ENCODE measurements at regions of chr1 and their contacts with region 1.

Region 1: GRCh38 chr1:27662707-27663393 is 9.1 kb downstream of the IFI6 start:
- DNase-seq: peak; percentile 94
- H3K4me3 Mint-ChIP-seq: peak overlapping the region; percentile 67
- H3K27ac Mint-ChIP-seq: peak overlapping the region; percentile 99
- H3K4me1 Mint-ChIP-seq: peaks cover 44% of the 10 kb centered on the region
- H3K27me3 Mint-ChIP-seq: no peaks in the 10 kb centered on the region

Region 2: DNA sequence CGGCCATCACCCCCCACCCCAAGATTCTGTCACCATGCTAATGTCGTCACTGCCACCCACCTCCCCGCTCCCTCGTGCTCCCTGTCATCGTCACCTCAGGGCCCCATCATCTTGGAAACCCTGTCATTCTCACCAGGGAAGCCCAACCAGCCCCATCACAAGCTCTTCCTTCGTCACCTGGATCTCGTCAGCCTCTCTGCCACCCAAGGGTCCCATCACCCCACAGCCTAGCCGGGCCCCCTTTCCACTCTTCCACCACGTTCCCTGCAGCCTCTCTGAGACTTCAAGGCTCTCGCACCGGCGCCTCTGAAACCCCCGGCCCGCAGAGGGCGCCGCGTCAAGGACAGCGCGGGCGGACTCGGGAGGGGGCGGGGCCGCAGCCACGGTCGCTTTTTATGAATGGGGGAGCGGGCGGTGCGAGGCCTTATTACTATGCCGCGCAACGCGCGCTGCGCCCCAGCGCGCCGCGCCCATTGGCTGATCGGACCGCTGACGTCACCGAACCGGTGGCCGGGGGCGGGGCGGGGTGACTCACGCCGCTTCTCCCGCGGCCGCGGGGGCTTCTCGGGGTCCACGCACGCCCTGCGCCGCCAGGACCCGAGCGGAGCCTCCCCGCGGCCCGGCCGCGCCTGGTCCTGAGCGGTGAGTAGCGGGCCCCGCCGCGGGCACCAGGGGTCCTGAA is 270.6 kb before region 1 on chr1 and contains the start of gene GPR3:
- CTCF ChIA-PET with region 1: interaction called, 11 read pairs
- POLR2A ChIA-PET with region 1: no interaction called
- intact Hi-C with region 1: loop called (anchors 2 kb)
- DNase-seq: peak; percentile 96
- H3K4me3 Mint-ChIP-seq: peak within 1 kb of the TSS; percentile 78
- H3K27ac Mint-ChIP-seq: peak within 1 kb of the TSS; percentile 63
- H3K4me1 Mint-ChIP-seq: peaks cover 13% of the 10 kb centered on the region
- H3K27me3 Mint-ChIP-seq: no peaks in the 10 kb centered on the region
- total RNA-seq, gene GPR3: 1.3 to 1.5 TPM

Region 3: GRCh38 chr1:27489910-27490741 is 172.7 kb before region 1 on chr1 and contains the start of gene WASF2:
- CTCF ChIA-PET with region 1: interaction called, 3 read pairs
- POLR2A ChIA-PET with region 1: interaction called, 3 read pairs
- intact Hi-C with region 1: loop called (anchors 2 kb)
- DNase-seq: peak; percentile 98
- H3K4me3 Mint-ChIP-seq: peak within 1 kb of the TSS; percentile 96
- H3K27ac Mint-ChIP-seq: peak within 1 kb of the TSS; percentile 99
- H3K4me1 Mint-ChIP-seq: peaks cover 28% of the 10 kb centered on the region
- H3K27me3 Mint-ChIP-seq: no peaks in the 10 kb centered on the region
- total RNA-seq, gene WASF2: 109 to 110 TPM

Region 4: DNA sequence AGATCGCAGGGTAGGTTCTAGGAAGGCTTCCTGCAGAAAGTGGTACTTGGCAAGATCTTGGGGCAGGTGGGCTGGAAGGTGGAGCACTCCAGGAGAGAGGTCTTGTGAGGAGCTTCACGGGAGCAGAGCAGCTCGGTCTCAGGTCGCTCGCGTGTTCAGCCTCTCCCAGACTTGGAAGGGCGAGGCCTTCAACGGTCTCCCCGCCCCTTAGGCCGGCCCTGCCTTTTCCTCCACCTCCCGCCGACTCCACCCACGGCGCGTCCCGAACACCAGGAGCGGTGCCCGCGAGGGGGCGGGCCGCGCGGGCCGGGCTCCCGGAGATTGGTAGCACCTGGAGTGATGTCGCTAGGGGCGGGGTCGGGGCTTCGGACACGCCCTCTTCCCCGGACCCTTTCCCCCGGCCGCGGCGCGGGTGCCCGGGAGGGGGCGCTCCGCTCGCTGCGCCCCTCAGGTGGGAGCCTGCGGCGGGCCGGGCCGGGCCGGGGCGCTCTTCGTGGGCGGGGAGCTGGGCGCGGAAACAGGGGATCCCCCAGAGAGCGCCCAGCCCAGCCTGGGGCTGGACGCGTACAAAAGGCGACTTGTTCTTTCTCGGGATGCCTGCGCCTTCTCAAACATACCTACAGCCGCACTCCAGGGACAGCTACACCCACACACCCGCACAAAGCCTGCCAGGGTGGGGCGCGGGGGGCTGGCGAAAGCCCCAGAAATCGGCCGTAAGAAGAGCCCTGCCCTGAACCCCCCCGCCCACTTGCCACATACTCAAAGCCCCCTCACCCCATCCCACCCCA is 94.4 kb before region 1 on chr1:
- CTCF ChIA-PET with region 1: interaction called, 10 read pairs
- POLR2A ChIA-PET with region 1: interaction called, 4 read pairs
- intact Hi-C with region 1: loop called (anchors 1 kb)
- DNase-seq: peak; percentile 96
- H3K4me3 Mint-ChIP-seq: peak overlapping the region; percentile 40
- H3K27ac Mint-ChIP-seq: no peak overlapping the region
- H3K4me1 Mint-ChIP-seq: peaks cover 12% of the 10 kb centered on the region
- H3K27me3 Mint-ChIP-seq: no peaks in the 10 kb centered on the region

Region 5: GRCh38 chr1:27616441-27616840 is 46.4 kb before region 1 on chr1:
- CTCF ChIA-PET with region 1: interaction called, 312 read pairs
- POLR2A ChIA-PET with region 1: interaction called, 4 read pairs
- intact Hi-C with region 1: no loop called
- DNase-seq: no peak
- H3K4me3 Mint-ChIP-seq: no peak overlapping the region
- H3K27ac Mint-ChIP-seq: no peak overlapping the region
- H3K4me1 Mint-ChIP-seq: peaks cover 37% of the 10 kb centered on the region
- H3K27me3 Mint-ChIP-seq: no peaks in the 10 kb centered on the region

Region 6: GRCh38 chr1:27643701-27644625 is 18.9 kb before region 1 on chr1:
- CTCF ChIA-PET with region 1: interaction called, 39 read pairs
- POLR2A ChIA-PET with region 1: no interaction called
- intact Hi-C with region 1: loop called (anchors 2 kb)
- DNase-seq: peak; percentile 78
- H3K4me3 Mint-ChIP-seq: no peak overlapping the region
- H3K27ac Mint-ChIP-seq: no peak overlapping the region
- H3K4me1 Mint-ChIP-seq: peaks cover 7% of the 10 kb centered on the region
- H3K27me3 Mint-ChIP-seq: no peaks in the 10 kb centered on the region

Region 7: DNA sequence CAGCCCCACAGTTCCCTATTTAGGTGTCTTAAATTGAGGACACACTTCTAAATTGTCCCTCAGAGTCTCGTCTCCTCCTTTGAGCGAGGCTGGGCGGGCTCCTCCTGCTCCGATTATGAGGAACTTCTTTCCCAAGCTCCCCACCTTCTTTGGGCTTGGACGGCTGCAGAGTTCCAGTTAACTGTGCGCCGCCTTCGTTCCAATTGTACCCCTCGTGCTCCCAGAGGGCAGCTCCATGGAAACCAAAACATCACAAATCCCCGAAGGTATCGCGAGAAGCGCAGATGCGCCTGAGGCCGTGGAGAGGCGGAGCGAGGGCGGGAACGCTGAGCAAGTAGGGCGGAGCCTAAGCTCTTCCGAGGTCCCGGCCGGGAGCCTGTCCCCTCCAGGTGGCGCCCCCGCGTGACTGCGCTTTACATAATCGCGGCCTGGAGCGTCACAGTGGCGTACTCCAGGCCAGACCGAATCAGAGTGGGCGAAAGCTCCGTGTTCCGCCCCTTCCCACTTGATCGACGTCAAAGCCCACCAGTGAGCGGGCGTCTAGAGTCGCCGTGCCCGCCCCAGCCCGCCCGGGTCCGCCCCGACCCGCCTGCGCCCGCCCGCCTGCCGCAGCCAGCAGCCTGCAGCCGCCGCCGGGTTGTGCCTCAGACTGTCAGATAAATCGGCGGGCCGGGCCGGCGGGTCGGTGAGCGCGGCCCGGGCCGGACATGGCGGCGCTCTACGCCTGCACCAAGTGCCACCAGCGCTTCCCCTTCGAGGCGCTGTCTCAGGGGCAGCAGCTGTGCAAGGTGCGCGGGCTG is 62.7 kb after region 1 on chr1 and contains the start of gene FAM76A:
- CTCF ChIA-PET with region 1: interaction called, 8 read pairs
- POLR2A ChIA-PET with region 1: no interaction called
- intact Hi-C with region 1: loop called (anchors 1 kb)
- DNase-seq: peak; percentile 100
- H3K4me3 Mint-ChIP-seq: peak within 1 kb of the TSS; percentile 81
- H3K27ac Mint-ChIP-seq: peak within 1 kb of the TSS; percentile 79
- H3K4me1 Mint-ChIP-seq: peaks cover 16% of the 10 kb centered on the region
- H3K27me3 Mint-ChIP-seq: no peaks in the 10 kb centered on the region
- total RNA-seq, gene FAM76A: 8.1 to 11.8 TPM

Region 8: DNA sequence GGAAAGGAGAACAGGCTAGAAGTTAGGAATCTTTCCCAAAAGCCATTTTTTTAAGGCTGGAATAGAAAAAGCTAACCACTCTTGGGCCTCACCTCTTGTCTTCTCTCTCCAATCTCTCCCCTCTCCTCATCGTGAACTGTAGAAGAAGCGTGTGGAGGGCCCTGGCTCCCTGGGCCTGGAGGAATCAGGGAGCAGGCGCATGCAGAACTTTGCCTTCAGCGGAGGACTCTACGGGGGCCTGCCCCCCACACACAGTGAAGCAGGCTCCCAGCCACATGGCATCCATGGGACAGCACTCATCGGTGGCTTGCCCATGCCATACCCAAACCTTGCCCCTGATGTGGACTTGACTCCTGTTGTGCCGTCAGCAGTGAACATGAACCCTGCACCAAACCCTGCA is 187.1 kb after region 1 on chr1:
- CTCF ChIA-PET with region 1: no interaction called
- POLR2A ChIA-PET with region 1: no interaction called
- intact Hi-C with region 1: no loop called
- DNase-seq: no peak
- H3K4me3 Mint-ChIP-seq: no peak overlapping the region
- H3K27ac Mint-ChIP-seq: no peak overlapping the region
- H3K4me1 Mint-ChIP-seq: no peaks in the 10 kb centered on the region
- H3K27me3 Mint-ChIP-seq: no peaks in the 10 kb centered on the region

Measured in activated CD4-positive, alpha-beta memory T cell treated with anti-CD3 and anti-CD28 coated beads for 36 hours (primary cell).